Naive thymus-derived CD4-positive, alpha-beta T cell (primary cell): ENCODE measurements at regions of chr10 and their contacts with region 1.

Region 1: DNA sequence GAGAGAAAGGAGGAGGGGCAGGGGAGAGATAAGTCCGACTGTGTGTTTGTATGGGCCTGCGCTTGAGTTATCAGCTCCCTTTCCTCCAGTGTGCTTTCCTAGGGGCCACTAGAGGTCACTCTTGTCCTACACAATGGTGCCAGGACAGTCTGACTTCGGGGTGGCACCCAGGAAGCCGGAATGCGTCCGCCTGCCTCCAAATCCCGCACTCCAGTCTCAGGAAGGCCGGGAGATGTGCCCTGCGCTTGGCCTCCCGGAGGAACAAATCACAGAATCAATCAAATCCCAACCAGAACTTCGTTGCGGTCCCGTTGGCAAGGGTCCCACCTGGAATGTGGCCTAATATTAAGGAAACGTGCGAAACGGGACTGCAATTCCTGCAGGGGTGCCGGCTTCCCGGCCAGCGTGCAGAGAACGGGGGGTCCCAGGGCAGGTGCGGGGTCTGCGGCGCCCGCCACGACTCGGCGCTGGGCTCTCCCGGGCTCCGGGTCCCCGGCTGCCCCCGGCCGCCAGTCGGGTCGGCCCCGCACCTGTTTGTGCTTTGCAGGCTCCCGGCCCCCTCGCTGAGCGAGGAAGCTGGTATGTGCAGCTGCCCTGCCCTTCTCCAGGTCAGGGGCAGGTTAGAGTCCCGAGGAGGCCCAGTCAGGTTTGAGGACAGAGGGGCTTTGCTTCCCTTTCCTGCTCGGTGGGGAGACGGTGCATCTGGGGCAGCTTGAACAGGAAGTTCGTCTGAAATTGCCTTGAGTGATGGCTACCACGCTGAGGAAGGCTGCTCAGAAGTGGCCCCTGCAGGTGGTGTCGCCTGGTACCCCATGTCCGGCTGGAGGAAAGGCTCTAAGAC is 21.0 kb upstream of the HPS1 start:
- DNase-seq: peak; percentile 32 to 75 (median 65)
- ATAC-seq: peak; percentile 96
- H3K4me3 ChIP-seq: peak overlapping the region; percentile 92
- H3K4me3 Mint-ChIP-seq: peak overlapping the region; percentile 86 to 100 (median 96)
- H3K27ac ChIP-seq: peak overlapping the region; percentile 45
- H3K27ac Mint-ChIP-seq: peak overlapping the region in 8 of 9 donors; percentile 67 to 93 (median 88)
- H3K4me1 ChIP-seq: no peaks in the 10 kb centered on the region
- H3K4me1 Mint-ChIP-seq: peaks cover 0 to 12% (median 6%) of the 10 kb centered on the region in 7 donors
- H3K27me3 ChIP-seq: no peaks in the 10 kb centered on the region
- H3K27me3 Mint-ChIP-seq: peaks cover 0 to 36% (median 6%) of the 10 kb centered on the region in 5 donors

Region 2: DNA sequence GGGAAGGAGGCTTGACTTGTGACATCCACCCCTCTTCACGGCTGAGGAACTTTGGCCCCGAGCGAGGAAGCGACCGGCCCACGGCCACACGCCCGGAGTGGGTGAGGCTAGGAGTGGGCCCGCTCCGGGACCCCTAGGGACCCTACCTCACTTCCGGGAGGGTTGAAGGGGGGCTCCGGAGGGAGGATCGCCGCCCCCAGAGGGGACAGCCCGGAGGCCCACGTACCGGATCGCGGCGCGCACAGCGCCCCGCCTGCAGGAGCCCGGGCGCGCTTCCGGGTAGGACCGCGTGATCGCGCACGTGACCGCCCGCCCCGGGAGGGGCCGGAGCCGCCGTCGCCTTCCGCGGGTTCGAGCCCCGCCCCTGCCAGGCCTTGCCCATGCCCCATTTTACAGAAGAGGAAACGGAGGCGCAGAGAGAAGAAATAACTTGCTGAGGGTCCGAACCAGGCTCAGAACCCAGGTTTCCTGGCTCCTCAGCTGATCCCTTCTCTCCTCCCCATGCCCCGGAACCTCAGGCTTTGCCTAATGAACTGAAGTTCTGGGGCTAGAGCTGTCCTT is 21.0 kb before region 1 on chr10 and contains the start of gene HPS1:
- CTCF ChIA-PET with region 1: interaction called, 3 read pairs
- POLR2A ChIA-PET with region 1: no interaction called
- intact Hi-C with region 1: loop called in 1 of 2 experiments (anchors 1 kb)
- DNase-seq: peak; percentile 60 to 88 (median 79)
- ATAC-seq: peak; percentile 93
- H3K4me3 ChIP-seq: peak within 1 kb of the TSS; percentile 87
- H3K4me3 Mint-ChIP-seq: peak within 1 kb of the TSS; percentile 76 to 96 (median 92)
- H3K27ac ChIP-seq: peak within 1 kb of the TSS; percentile 88
- H3K27ac Mint-ChIP-seq: peak within 1 kb of the TSS; percentile 75 to 97 (median 89)
- H3K4me1 ChIP-seq: peaks cover 19 to 21% of the 10 kb centered on the region in 2 donors
- H3K4me1 Mint-ChIP-seq: peaks cover 18 to 56% (median 44%) of the 10 kb centered on the region in 7 donors
- H3K27me3 ChIP-seq: no peaks in the 10 kb centered on the region
- H3K27me3 Mint-ChIP-seq: peaks cover 0 to 20% (median 6%) of the 10 kb centered on the region in 5 donors
- total RNA-seq, gene HPS1: 68.5 to 107 (median 90.9) TPM

Region 3: GRCh38 chr10:98664331-98665042 is 196.8 kb after region 1 on chr10:
- CTCF ChIA-PET with region 1: interaction called, 11 read pairs
- POLR2A ChIA-PET with region 1: no interaction called
- intact Hi-C with region 1: loop called in 1 of 2 experiments (anchors 1 kb)
- DNase-seq: peak in 8 of 9 donors; percentile 5 to 43 (median 20)
- ATAC-seq: peak; percentile 70
- H3K4me3 ChIP-seq: no peak overlapping the region
- H3K4me3 Mint-ChIP-seq: no peak overlapping the region
- H3K27ac ChIP-seq: no peak overlapping the region
- H3K27ac Mint-ChIP-seq: no peak overlapping the region
- H3K4me1 ChIP-seq: no peaks in the 10 kb centered on the region
- H3K4me1 Mint-ChIP-seq: no peaks in the 10 kb centered on the region
- H3K27me3 ChIP-seq: no peaks in the 10 kb centered on the region
- H3K27me3 Mint-ChIP-seq: peaks cover 21 to 37% (median 24%) of the 10 kb centered on the region in 5 donors

Region 4: GRCh38 chr10:99276848-99277486 is 809.2 kb after region 1 on chr10:
- CTCF ChIA-PET with region 1: no interaction called
- POLR2A ChIA-PET with region 1: no interaction called
- intact Hi-C with region 1: loop called in 1 of 2 experiments (anchors 1 kb)
- DNase-seq: no peak
- ATAC-seq: no peak
- H3K4me3 ChIP-seq: no peak overlapping the region
- H3K4me3 Mint-ChIP-seq: no peak overlapping the region
- H3K27ac ChIP-seq: no peak overlapping the region
- H3K27ac Mint-ChIP-seq: no peak overlapping the region
- H3K4me1 ChIP-seq: no peaks in the 10 kb centered on the region
- H3K4me1 Mint-ChIP-seq: no peaks in the 10 kb centered on the region
- H3K27me3 ChIP-seq: peaks cover 0 to 4% of the 10 kb centered on the region in 2 donors
- H3K27me3 Mint-ChIP-seq: peaks cover 13 to 41% (median 27%) of the 10 kb centered on the region in 5 donors

Region 5: DNA sequence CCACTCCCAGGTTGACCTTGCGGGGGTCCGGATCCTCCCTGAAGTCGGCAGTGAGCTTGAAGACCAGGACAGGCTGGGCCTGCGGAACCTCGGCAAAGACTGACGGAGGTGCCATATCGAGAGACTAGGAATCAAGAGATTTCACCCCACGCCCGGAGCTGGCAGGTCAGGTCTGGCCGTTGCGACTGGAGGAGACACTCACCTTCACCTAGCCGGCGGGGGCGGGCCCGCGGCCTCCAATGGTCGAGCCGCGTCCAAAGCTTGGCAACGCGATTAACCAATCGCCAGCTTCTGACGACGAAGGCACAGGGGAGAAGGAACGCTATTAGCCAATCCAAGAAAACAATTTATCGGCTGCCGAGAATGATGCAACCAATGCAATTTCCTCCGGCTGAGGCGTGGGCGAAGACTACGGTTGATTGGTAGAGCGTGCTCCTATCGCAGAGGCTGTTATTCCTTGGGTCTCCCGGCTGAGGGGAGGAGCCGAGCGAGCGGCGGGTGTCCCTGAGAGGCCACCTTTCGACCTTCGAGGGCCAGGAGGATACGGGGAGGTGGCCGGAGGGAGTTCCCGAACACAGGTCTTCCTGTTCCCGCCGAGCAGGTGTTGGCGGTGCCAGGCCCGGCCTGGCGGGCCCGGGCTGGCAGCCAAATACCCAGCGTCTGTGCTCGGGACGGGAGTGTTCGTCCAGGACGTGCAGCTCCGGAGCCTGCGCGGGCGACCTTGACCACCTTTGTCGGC is 962.9 kb after region 1 on chr10 and contains the start of gene GOT1:
- CTCF ChIA-PET with region 1: no interaction called
- POLR2A ChIA-PET with region 1: no interaction called
- intact Hi-C with region 1: loop called in 1 of 2 experiments (anchors 5 kb)
- DNase-seq: peak; percentile 72 to 95 (median 94)
- ATAC-seq: peak; percentile 97
- H3K4me3 ChIP-seq: peak within 1 kb of the TSS; percentile 81
- H3K4me3 Mint-ChIP-seq: peak within 1 kb of the TSS; percentile 94 to 100 (median 98)
- H3K27ac ChIP-seq: peak within 1 kb of the TSS; percentile 90
- H3K27ac Mint-ChIP-seq: peak within 1 kb of the TSS; percentile 88 to 97 (median 94)
- H3K4me1 ChIP-seq: peaks cover 5 to 9% of the 10 kb centered on the region in 2 donors
- H3K4me1 Mint-ChIP-seq: peaks cover 19 to 53% (median 44%) of the 10 kb centered on the region in 7 donors
- H3K27me3 ChIP-seq: no peaks in the 10 kb centered on the region
- H3K27me3 Mint-ChIP-seq: no peaks in the 10 kb centered on the region
- total RNA-seq, gene GOT1: 8.0 to 22.2 (median 10.2) TPM

Region 6: GRCh38 chr10:100046021-100046486 is 1578.3 kb after region 1 on chr10:
- CTCF ChIA-PET with region 1: no interaction called
- POLR2A ChIA-PET with region 1: no interaction called
- intact Hi-C with region 1: loop called in 1 of 2 experiments (anchors 5 kb)
- DNase-seq: peak; percentile 38 to 80 (median 71)
- ATAC-seq: peak; percentile 86
- H3K4me3 ChIP-seq: no peak overlapping the region
- H3K4me3 Mint-ChIP-seq: no peak overlapping the region
- H3K27ac ChIP-seq: no peak overlapping the region
- H3K27ac Mint-ChIP-seq: peak overlapping the region in 2 of 9 donors; percentile 9 to 42
- H3K4me1 ChIP-seq: no peaks in the 10 kb centered on the region
- H3K4me1 Mint-ChIP-seq: peaks cover 0 to 6% (median 0%) of the 10 kb centered on the region in 7 donors
- H3K27me3 ChIP-seq: no peaks in the 10 kb centered on the region
- H3K27me3 Mint-ChIP-seq: peaks cover 0 to 13% (median 6%) of the 10 kb centered on the region in 5 donors

Region 7: GRCh38 chr10:100223879-100224278 is 1756.2 kb after region 1 on chr10:
- CTCF ChIA-PET with region 1: no interaction called
- POLR2A ChIA-PET with region 1: no interaction called
- intact Hi-C with region 1: no loop called
- DNase-seq: no peak
- ATAC-seq: no peak
- H3K4me3 ChIP-seq: no peak overlapping the region
- H3K4me3 Mint-ChIP-seq: no peak overlapping the region
- H3K27ac ChIP-seq: no peak overlapping the region
- H3K27ac Mint-ChIP-seq: peak overlapping the region in 1 of 9 donors; percentile 11
- H3K4me1 ChIP-seq: no peaks in the 10 kb centered on the region
- H3K4me1 Mint-ChIP-seq: peaks cover 9 to 29% (median 25%) of the 10 kb centered on the region in 7 donors
- H3K27me3 ChIP-seq: no peaks in the 10 kb centered on the region
- H3K27me3 Mint-ChIP-seq: no peaks in the 10 kb centered on the region